PC-9 (cell line): ENCODE measurements at regions of chr1 and their contacts with region 1.

Region 1: DNA sequence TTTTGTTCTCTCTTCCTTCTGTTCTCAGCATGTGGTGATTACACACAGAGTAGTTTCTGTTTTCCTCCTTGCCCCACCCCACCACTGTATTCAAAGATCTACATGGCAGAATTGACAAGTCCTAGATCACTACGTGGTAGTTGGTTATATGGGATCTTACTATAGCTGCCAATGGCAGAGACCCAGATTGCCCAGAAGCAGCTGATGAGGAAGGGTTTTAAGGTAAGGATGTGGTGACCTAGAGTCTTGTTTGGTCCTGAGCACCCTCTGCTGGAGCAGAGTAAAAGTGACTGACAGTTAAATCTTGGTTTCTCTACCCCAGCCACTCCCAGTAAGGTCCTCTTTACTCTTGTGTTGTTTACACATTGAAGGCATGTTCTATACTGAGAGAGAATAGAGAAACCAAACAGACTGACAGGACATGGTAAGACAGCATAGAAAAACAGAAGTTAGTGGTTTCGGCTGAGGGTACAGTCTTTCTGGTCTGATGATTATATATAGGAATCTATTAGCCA is 22.8 kb upstream of the STRIP1 start:
- DNase-seq: peak; percentile 27 to 59
- H3K4me3 ChIP-seq: no peak overlapping the region
- H3K27ac ChIP-seq: no peak overlapping the region
- H3K4me1 ChIP-seq: peaks cover 11% of the 10 kb centered on the region
- H3K27me3 ChIP-seq: no peaks in the 10 kb centered on the region
- CTCF ChIP-seq: peak; percentile 82

Region 2: DNA sequence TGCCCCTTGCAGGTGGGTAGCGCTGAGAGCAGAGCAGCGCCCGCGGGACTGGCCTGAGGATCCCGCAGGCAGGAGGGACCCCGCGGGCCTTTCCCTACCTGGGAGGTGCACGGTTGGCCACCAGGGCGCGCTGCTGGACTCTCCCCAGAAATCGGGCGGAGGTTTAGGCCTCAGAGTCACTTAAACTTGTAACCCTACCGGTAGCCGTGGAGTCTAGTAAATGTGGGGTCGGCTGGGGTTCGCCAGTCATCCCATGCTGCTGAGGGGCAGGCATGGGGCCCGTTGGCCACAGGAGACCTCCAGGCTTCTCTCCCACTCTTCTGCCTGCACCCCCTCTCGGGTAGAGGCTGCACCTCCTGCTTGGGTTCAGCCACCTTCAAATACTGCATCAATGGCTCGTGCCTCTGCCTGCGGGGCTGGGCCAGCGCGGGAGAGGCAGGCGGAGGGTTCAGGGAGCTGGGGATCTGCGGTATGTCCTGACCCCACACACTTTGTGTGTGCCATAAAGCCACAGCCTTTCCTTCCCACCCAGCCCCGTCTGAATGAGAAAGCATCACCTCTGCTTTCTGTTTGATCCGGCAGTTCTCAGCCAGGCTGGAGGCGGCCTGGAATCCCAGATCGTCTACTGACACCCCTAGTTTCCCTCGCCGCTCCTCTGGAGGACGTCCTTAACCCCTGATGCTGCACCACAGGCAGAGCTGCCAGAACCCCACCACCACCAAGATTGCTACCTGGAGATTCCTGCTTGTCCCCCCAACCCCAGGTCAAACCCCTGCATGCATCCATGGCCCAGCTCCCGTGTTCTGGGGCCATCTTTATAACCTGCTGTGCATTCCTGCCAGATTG is 368.0 kb before region 1 on chr1:
- CTCF ChIA-PET with region 1: interaction called, 4 read pairs
- POLR2A ChIA-PET with region 1: no interaction called
- intact Hi-C with region 1: loop called (anchors 5 kb)
- DNase-seq: peak; percentile 78 to 85
- H3K4me3 ChIP-seq: peak overlapping the region; percentile 38; the same call in 1 of the 2 replicates
- H3K27ac ChIP-seq: no peak overlapping the region
- H3K4me1 ChIP-seq: peaks cover 10% of the 10 kb centered on the region
- H3K27me3 ChIP-seq: no peaks in the 10 kb centered on the region
- CTCF ChIP-seq: peak; percentile 96

Region 3: DNA sequence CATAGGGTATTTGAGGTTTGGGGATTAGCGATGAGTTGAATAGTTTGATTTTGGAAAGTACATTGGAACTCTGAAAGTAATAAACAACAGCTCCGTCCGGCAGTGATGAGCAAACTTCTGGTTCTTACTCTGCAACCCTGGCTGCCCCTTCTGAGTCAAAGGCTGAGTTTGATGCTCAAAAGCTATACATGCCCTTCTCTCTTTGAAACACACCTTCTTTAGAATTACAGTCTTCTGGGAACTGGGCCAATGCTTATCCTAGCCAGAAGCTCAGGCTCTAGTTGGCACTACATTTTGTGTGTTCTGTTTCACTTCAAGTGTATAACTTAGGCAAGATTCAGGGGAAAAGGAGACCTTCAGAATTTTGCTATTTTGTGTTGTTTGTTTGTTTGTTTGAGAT is 17.7 kb before region 1 on chr1:
- CTCF ChIA-PET with region 1: no interaction called
- POLR2A ChIA-PET with region 1: no interaction called
- intact Hi-C with region 1: no loop called
- DNase-seq: no peak
- H3K4me3 ChIP-seq: no peak overlapping the region
- H3K27ac ChIP-seq: no peak overlapping the region
- H3K4me1 ChIP-seq: peaks cover 46% of the 10 kb centered on the region
- H3K27me3 ChIP-seq: no peaks in the 10 kb centered on the region
- CTCF ChIP-seq: no peak

Region 4: DNA sequence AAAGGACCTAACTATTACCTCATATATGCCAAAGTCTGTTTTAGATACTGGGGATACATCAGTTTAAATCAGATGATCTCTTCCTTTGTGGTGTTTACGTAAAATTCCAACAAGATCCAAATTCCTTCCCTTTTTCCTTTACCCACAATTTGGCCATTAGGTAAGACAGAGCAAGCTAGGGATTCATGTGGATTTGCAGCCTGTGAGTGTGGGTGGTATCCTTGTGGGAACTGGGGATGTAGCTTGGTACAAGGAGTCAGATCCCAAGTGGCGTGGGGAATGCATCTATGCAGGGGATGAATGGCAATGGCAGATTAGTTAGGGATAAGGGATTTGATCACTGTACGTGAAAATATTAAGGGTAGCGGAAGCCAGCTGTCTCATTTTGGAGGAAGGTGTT is 13.0 kb after region 1 on chr1:
- CTCF ChIA-PET with region 1: no interaction called
- POLR2A ChIA-PET with region 1: interaction called, 23 read pairs
- intact Hi-C with region 1: no loop called
- DNase-seq: no peak
- H3K4me3 ChIP-seq: no peak overlapping the region
- H3K27ac ChIP-seq: no peak overlapping the region
- H3K4me1 ChIP-seq: no peaks in the 10 kb centered on the region
- H3K27me3 ChIP-seq: no peaks in the 10 kb centered on the region
- CTCF ChIP-seq: no peak